ENCODE measurements at regions of chr15 and their contacts with region 1.

Region 1: GRCh38 chr15:64093627-64094417 is at the start of gene CIAO2A:
- DNase-seq: peak; percentile 97
- ATAC-seq: peak; percentile 87
- H3K4me3 Mint-ChIP-seq: peak within 1 kb of the TSS; percentile 91
- H3K27ac Mint-ChIP-seq: peak within 1 kb of the TSS; percentile 96
- H3K4me1 Mint-ChIP-seq: peaks cover 49% of the 10 kb centered on the region
- H3K27me3 Mint-ChIP-seq: no peaks in the 10 kb centered on the region
- total RNA-seq, gene CIAO2A: 95.5 to 111 TPM

Region 2: DNA sequence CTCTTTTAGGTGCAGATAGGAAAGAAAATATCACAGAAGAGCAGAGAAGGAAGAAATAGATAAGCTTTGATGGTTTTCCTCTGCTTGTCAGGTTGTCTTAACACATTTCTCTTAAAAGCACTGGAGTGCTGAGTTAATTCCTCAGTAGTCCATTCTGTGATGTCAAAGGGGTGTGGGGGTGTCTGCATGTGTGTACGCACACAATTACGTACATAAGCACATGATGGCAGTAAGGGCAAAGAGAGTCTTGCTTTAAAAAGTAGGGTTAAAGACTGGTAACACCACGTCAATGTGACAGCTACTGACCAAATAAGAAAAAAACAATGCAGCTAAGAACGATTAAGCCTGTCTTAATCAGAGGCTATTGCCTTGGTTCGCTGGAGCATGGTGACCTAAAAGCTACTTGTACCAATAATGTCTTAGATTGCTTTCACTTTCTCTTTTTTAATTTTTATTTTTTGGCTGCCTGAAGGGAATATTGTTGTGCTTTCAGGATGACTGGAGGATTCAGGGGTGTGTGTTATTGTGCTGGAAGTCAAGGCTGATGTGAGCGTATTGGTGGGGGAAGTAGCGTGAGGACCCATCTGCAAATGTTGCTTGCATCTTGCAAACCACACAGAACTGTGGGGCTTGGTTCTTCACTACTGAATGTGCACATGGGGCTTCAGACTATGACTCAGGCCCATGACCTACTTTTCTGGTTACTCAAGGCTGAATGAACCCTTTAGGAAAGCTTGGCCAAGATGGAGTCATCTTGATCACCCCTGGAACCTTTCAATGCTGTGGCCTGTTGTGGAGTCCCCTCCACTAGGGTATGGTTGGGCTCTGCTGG is 1469.1 kb before region 1 on chr15:
- CTCF ChIA-PET with region 1: no interaction called
- POLR2A ChIA-PET with region 1: no interaction called
- intact Hi-C with region 1: no loop called
- DNase-seq: peak; percentile 6
- ATAC-seq: peak; percentile 63
- H3K4me3 Mint-ChIP-seq: no peak overlapping the region
- H3K27ac Mint-ChIP-seq: no peak overlapping the region
- H3K4me1 Mint-ChIP-seq: peaks cover 2% of the 10 kb centered on the region
- H3K27me3 Mint-ChIP-seq: peaks cover 4% of the 10 kb centered on the region

Region 3: GRCh38 chr15:63122002-63122893 is 971.6 kb before region 1 on chr15:
- CTCF ChIA-PET with region 1: no interaction called
- POLR2A ChIA-PET with region 1: no interaction called
- intact Hi-C with region 1: loop called in 1 of 2 experiments (anchors 5 kb)
- DNase-seq: peak; percentile 91
- ATAC-seq: peak; percentile 89
- H3K4me3 Mint-ChIP-seq: peak overlapping the region; percentile 92
- H3K27ac Mint-ChIP-seq: peak overlapping the region; percentile 88
- H3K4me1 Mint-ChIP-seq: peaks cover 12% of the 10 kb centered on the region
- H3K27me3 Mint-ChIP-seq: no peaks in the 10 kb centered on the region

Region 4: DNA sequence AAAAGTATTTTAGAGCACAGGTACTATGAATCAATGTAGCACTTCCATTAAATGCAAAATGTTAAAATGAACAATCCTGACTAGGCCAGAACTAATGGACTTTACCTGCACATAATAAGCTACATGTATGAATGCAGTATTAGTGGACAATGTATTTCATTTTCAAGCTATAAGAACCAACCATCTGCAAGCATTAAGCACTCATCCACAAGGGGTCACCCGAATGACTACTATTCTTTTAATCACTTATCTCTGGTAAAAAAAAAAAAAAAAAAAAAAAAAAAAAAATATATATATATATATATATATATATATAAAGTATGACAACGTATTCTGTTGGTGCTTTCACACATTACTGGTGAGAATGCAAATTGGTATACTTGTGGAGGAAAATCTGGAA is 267.3 kb before region 1 on chr15:
- CTCF ChIA-PET with region 1: interaction called, 4 read pairs
- POLR2A ChIA-PET with region 1: no interaction called
- intact Hi-C with region 1: loop called in 1 of 2 experiments (anchors 5 kb)
- DNase-seq: peak; percentile 41
- ATAC-seq: no peak
- H3K4me3 Mint-ChIP-seq: no peak overlapping the region
- H3K27ac Mint-ChIP-seq: peak overlapping the region; percentile 74
- H3K4me1 Mint-ChIP-seq: peaks cover 79% of the 10 kb centered on the region
- H3K27me3 Mint-ChIP-seq: no peaks in the 10 kb centered on the region

Region 5: GRCh38 chr15:64010719-64011118 is 83.1 kb before region 1 on chr15:
- CTCF ChIA-PET with region 1: interaction called, 4 read pairs
- POLR2A ChIA-PET with region 1: interaction called, 7 read pairs
- intact Hi-C with region 1: loop called in 1 of 2 experiments (anchors 1 kb)
- DNase-seq: peak; percentile 90
- ATAC-seq: peak; percentile 78
- H3K4me3 Mint-ChIP-seq: peak overlapping the region; percentile 31
- H3K27ac Mint-ChIP-seq: peak overlapping the region; percentile 87
- H3K4me1 Mint-ChIP-seq: peaks cover 45% of the 10 kb centered on the region
- H3K27me3 Mint-ChIP-seq: no peaks in the 10 kb centered on the region

Region 6: DNA sequence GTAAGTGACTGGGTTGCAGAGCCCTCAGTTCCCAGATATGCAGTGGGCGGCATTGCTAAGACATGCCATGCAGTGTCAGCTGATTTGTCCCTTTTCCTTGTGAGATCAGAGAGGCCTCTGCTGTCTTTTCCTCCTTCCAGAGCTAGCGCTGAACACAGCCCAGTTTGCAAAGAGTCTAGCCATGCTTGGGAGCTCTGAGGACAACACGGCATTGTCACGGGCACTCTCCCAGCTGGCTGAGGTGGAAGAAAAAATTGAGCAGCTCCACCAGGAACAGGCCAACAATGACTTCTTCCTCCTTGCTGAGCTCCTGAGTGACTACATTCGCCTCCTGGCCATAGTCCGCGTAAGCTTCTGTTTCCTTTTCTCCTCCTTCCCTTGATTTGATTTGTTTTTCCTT is 37.7 kb after region 1 on chr15:
- CTCF ChIA-PET with region 1: no interaction called
- POLR2A ChIA-PET with region 1: no interaction called
- intact Hi-C with region 1: no loop called
- DNase-seq: no peak
- ATAC-seq: no peak
- H3K4me3 Mint-ChIP-seq: no peak overlapping the region
- H3K27ac Mint-ChIP-seq: no peak overlapping the region
- H3K4me1 Mint-ChIP-seq: no peaks in the 10 kb centered on the region
- H3K27me3 Mint-ChIP-seq: no peaks in the 10 kb centered on the region

Region 7: DNA sequence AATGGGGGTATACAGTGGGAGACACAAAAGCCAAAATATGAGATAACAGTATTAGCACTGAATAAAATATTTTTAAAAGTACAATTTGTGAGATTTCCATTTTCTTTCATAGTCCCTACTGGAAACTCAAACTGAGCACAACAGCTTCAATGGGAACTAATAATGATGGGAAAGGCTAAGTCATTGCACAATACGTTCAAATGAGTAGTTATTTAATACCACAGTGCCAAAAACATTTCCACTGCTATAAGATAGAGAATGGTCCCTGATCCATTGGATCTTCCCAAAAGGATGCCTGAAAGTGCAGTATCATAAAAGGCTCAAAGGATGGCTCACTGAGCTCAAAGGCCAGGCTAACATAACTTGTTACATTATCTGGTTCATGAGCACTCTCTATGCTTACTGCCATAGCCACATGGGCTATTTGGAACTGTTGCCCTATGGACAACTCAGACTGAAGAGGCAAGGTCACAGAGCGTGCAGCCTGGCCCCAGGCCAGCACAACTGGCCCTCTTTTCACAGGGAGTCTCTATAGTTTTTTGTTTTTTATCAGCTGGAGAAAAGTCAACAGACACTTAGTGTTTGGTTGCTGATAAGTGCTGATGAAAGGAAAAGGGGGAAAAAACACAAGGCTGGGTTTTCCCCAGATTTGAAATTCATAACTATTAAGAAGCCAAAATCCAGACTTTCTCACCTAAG is 123.1 kb after region 1 on chr15:
- CTCF ChIA-PET with region 1: no interaction called
- POLR2A ChIA-PET with region 1: no interaction called
- intact Hi-C with region 1: no loop called
- DNase-seq: no peak
- ATAC-seq: no peak
- H3K4me3 Mint-ChIP-seq: no peak overlapping the region
- H3K27ac Mint-ChIP-seq: no peak overlapping the region
- H3K4me1 Mint-ChIP-seq: peaks cover under 1% of the 10 kb centered on the region
- H3K27me3 Mint-ChIP-seq: no peaks in the 10 kb centered on the region

Region 8: DNA sequence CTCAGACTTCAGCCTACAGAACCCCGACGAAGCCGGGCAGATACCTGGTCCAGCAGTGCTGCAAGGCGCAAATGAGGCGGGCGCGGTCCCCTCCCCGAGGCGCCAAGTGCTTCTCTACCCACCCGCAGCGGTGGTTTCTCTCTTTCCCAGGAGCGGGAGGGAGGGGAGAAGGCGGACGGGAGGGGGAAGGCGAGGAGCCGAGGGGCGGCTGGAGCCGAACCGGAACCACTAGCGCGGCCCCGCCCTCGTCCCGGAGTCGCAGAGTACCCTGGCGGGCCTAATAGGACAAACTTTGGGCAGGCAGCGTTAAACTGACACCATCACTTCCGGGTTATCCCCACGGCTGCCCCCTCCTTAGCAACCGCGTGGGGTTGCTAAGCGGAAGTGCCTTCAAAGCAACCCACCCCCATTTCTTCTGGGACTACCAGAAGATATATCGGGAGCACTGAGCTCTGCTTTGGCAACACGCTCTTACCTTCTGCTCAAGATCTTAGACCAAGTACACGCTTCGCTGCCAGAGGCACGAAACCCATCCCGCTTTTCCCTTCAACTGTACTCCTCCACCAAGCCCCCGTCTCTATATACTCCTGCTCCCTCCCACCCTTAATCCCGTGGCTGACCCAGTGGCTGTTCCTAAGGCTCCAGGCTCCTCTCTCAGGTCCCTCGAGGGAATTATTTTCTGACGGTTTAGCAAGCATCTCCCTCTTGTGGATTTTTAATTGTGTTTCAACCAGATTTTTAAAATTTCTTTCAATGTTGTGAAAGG is 262.3 kb after region 1 on chr15 and contains the start of gene CSNK1G1:
- CTCF ChIA-PET with region 1: no interaction called
- POLR2A ChIA-PET with region 1: no interaction called
- intact Hi-C with region 1: loop called (anchors 1 to 10 kb)
- DNase-seq: peak; percentile 94
- ATAC-seq: peak; percentile 99
- H3K4me3 Mint-ChIP-seq: peak within 1 kb of the TSS; percentile 89
- H3K27ac Mint-ChIP-seq: peak within 1 kb of the TSS; percentile 84
- H3K4me1 Mint-ChIP-seq: peaks cover 17% of the 10 kb centered on the region
- H3K27me3 Mint-ChIP-seq: no peaks in the 10 kb centered on the region
- total RNA-seq, gene CSNK1G1: 20.3 to 22.5 TPM

Region 9: GRCh38 chr15:64702816-64703646 is 609.2 kb after region 1 on chr15:
- CTCF ChIA-PET with region 1: no interaction called
- POLR2A ChIA-PET with region 1: no interaction called
- intact Hi-C with region 1: loop called in 1 of 2 experiments (anchors 2 kb)
- DNase-seq: peak; percentile 98
- ATAC-seq: peak; percentile 91
- H3K4me3 Mint-ChIP-seq: peak overlapping the region; percentile 72
- H3K27ac Mint-ChIP-seq: peak overlapping the region; percentile 86
- H3K4me1 Mint-ChIP-seq: peaks cover 52% of the 10 kb centered on the region
- H3K27me3 Mint-ChIP-seq: no peaks in the 10 kb centered on the region

Region 10: DNA sequence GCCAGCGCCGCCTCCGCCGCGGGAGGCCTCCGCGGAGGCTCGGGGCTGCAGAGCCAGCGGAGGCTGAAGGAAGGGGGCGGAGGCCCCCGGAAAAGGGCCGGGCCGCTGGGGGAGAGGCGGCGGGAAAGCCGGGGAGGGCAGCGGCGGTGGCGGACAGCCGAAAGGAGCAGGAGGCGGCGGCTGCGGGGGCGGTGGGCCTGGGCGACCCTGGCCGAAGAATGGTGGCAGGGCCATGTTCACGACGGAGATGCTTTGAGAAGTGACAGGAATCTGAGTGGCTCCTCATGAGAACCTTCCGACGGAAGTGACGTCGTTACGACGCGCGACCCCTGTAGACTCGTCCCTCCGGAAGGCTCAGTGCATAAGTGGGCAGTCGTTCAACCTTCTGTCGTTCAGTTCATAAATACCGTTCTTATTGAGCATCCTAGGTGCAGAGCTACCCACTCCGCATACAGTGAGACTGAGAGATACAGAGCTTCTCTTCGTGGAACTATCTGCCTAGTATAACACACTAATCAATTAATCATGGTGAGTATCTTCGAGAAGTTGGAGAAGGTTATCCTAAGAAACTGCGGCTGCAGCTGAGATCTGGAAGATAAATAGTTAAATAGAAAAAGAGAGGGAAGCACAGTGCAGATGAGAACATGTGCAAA is 1039.9 kb after region 1 on chr15 and contains the start of gene PDCD7:
- CTCF ChIA-PET with region 1: no interaction called
- POLR2A ChIA-PET with region 1: no interaction called
- intact Hi-C with region 1: loop called in 1 of 2 experiments (anchors 5 kb)
- DNase-seq: peak; percentile 91
- ATAC-seq: peak; percentile 96
- H3K4me3 Mint-ChIP-seq: peak within 1 kb of the TSS; percentile 85
- H3K27ac Mint-ChIP-seq: peak within 1 kb of the TSS; percentile 93
- H3K4me1 Mint-ChIP-seq: peaks cover 26% of the 10 kb centered on the region
- H3K27me3 Mint-ChIP-seq: no peaks in the 10 kb centered on the region
- total RNA-seq, gene PDCD7: 16.6 to 24.8 TPM